Thyroid gland (tissue), 4 donors: ENCODE measurements at regions of chr9 and their contacts with region 1.

Region 1: DNA sequence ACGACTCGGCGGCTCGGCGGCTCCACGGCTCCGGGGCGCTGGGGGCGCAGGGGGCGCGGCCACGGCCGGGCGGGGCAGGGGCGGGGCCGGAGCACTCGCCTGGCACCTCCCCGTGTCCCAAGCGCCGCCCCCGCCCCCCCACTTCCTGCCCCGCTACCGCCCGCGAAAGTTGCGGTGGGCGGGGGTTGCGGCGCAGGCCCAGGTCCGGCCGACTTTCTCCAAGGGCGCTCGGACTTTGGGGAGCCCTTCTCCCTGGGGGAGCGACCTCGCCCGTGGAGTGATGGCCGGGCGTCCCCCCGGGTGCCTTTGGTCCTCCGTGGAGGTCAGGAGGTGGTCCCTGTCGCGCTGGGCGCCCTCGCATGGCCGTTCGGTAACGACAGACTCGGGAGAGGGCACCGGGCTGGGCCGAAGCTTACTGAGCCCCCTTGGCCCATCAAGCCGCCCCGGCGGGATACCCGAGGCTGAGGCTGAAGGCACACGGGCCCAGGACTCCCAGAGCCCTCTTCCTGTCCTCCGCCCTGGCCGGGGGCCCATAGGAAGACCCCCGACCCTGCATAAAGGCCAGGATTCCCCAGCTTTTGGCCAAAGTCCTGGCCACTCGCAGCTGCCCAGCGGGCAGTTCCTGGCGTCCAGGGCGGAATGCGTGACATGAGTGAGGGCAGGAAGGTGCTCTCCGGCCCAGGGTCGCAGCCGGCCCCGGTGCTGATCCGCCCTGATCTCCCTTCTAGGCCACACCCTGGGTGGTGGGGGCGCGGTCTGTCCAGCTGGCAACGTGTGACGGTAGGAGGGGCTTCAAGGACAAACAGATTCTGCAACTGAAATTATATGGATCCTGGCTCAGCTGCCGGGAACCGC is 883 bp upstream of the VAV2 start:
- DNase-seq: peak; percentile 83 to 86
- H3K4me3 ChIP-seq: peak overlapping the region in 2 of 3 donors; percentile 38 to 40
- H3K27ac ChIP-seq: peak overlapping the region; percentile 70 to 87 (median 83)
- H3K4me1 ChIP-seq: peaks cover 26 to 37% of the 10 kb centered on the region in 2 donors
- H3K27me3 ChIP-seq: no peaks in the 10 kb centered on the region
- CTCF ChIP-seq: peak in 4 of 6 experiments; percentile 30 to 43 (median 40)
- POLR2A ChIP-seq: peak; percentile 30 to 53

Region 2: DNA sequence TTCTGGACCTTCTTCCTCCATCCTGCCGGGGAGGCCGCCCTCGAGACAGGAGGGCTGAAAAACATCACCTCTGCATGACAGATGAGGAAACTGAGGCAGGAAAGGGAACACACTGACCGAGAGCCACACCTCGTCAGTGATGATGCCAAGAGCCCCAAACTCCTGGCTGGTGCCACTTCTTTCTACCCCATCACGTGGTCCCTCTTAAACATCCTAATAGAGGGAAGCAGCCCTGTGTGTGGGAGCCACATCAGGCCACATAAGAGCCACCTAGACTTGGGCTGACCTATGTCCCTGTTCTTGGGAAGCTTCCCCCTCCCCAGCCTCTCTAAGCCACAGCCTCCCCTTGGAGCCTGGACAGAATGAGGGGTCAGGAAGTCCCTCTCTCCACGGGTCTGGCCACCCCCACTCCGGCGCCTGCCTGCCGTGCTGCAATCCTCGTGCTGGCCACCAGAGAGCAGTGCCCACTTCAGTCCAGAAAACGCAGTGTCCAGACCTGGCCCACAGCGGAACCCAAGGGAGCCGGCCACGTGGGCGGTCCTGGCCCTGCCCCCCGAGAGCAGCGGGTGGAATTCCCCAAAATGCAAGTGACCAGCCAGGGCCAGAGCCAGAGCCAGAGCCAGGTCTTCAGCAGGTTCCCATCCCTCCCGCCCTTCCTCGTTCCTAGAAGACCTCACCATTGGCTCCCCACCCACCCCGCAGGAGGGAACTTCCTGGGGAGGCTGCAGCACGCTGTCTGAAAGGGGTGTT is 200.1 kb before region 1 on chr9:
- intact Hi-C with region 1: loop called (anchors 1 kb)
- DNase-seq: peak; percentile 79 to 81
- H3K4me3 ChIP-seq: no peak overlapping the region
- H3K27ac ChIP-seq: no peak overlapping the region
- H3K4me1 ChIP-seq: peaks cover 0 to 25% of the 10 kb centered on the region in 2 donors
- H3K27me3 ChIP-seq: no peaks in the 10 kb centered on the region
- CTCF ChIP-seq: peak; percentile 86 to 97 (median 94)
- POLR2A ChIP-seq: no peak

Region 3: GRCh38 chr9:133934482-133935232 is 58.4 kb before region 1 on chr9:
- intact Hi-C with region 1: loop called (anchors 5 kb)
- DNase-seq: no peak
- H3K4me3 ChIP-seq: no peak overlapping the region
- H3K27ac ChIP-seq: peak overlapping the region; percentile 66 to 87 (median 85)
- H3K4me1 ChIP-seq: peaks cover 43 to 60% of the 10 kb centered on the region in 2 donors
- H3K27me3 ChIP-seq: no peaks in the 10 kb centered on the region
- CTCF ChIP-seq: no peak
- POLR2A ChIP-seq: no peak

Region 4: GRCh38 chr9:134617961-134618832 is 625.2 kb after region 1 on chr9:
- intact Hi-C with region 1: no loop called
- DNase-seq: no peak
- H3K4me3 ChIP-seq: no peak overlapping the region
- H3K27ac ChIP-seq: no peak overlapping the region
- H3K4me1 ChIP-seq: no peaks in the 10 kb centered on the region
- H3K27me3 ChIP-seq: no peaks in the 10 kb centered on the region
- CTCF ChIP-seq: no peak
- POLR2A ChIP-seq: no peak